ENCODE measurements at regions of chr4 and their contacts with region 1.

Region 1: DNA sequence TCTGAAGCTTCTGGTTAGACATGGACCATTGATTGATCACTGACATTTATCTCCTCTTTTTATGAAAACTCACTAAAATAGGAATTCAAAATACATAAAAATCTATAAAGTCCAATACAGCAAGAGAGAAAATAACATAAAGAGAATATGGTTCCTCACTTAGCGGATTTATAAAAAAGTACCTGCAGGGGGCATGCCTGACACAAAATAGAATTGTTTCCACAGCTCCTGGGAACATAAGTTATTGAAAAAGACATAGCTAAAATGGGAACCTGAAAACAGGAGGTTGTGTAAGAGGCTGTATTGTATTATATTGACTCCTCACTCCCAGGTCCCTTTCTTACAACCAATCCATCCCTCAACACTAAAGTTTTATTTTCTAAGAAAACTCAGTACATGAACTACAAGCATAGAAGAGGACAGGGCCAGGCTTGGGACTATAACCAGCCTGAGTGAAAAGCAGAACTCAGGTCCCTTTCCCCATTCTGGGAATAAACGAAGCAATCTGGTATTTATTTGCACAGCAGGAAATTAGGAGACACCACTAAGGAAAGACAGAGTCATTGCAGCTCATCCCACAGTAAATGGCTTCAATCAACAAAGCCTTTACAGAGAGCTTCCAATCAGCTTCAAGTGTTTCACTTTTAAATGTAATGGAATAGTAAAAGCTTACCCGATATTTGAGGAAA is 121.1 kb upstream of the NDST4 start:
- DNase-seq: peak; percentile 22
- ATAC-seq: peak; percentile 83
- H3K4me3 ChIP-seq: no peak overlapping the region
- H3K27ac ChIP-seq: no peak overlapping the region
- H3K4me1 ChIP-seq: no peaks in the 10 kb centered on the region
- H3K27me3 ChIP-seq: no peaks in the 10 kb centered on the region
- CTCF ChIP-seq: peak; percentile 22 to 54 (median 33); a peak in 4 of 6 replicates
- POLR2A ChIP-seq: no peak
- RAD21 ChIP-seq: peak; percentile 62

Region 2: GRCh38 chr4:114911111-114911510 is 323.4 kb before region 1 on chr4:
- CTCF ChIA-PET with region 1: no interaction called
- POLR2A ChIA-PET with region 1: no interaction called
- RAD21 ChIA-PET with region 1: no interaction called
- intact Hi-C with region 1: no loop called
- DNase-seq: no peak
- ATAC-seq: no peak
- H3K4me3 ChIP-seq: no peak overlapping the region
- H3K27ac ChIP-seq: no peak overlapping the region
- H3K4me1 ChIP-seq: no peaks in the 10 kb centered on the region
- H3K27me3 ChIP-seq: no peaks in the 10 kb centered on the region
- CTCF ChIP-seq: no peak
- POLR2A ChIP-seq: no peak
- RAD21 ChIP-seq: no peak

Region 3: DNA sequence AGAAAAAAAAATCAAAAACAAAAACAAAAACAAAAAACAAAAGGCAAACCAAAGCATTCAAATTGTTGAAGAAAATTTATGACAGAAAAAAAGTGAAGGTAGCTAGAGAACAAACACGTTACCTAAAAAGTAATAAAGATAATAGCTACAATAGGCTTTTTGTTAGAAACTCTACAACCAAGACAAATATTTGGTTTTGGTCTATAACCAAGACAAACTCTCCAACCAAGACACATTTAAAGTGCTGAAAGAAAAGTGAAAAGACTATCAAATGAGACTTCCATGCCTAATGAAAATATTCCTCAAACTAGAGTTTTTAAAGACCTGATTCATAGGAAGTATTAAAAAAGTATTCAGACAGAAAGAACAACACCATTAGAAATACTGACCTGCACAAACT is 270.8 kb after region 1 on chr4:
- CTCF ChIA-PET with region 1: no interaction called
- POLR2A ChIA-PET with region 1: no interaction called
- RAD21 ChIA-PET with region 1: no interaction called
- intact Hi-C with region 1: no loop called
- DNase-seq: no peak
- ATAC-seq: no peak
- H3K4me3 ChIP-seq: no peak overlapping the region
- H3K27ac ChIP-seq: no peak overlapping the region
- H3K4me1 ChIP-seq: no peaks in the 10 kb centered on the region
- H3K27me3 ChIP-seq: no peaks in the 10 kb centered on the region
- CTCF ChIP-seq: no peak
- POLR2A ChIP-seq: no peak
- RAD21 ChIP-seq: no peak

Region 4: GRCh38 chr4:115537387-115537786 is 302.8 kb after region 1 on chr4:
- CTCF ChIA-PET with region 1: interaction called, 27 read pairs
- POLR2A ChIA-PET with region 1: no interaction called
- RAD21 ChIA-PET with region 1: interaction called in 1 of 2 experiments, 3 read pairs
- intact Hi-C with region 1: loop called (anchors 2 kb)
- DNase-seq: peak; percentile 12
- ATAC-seq: no peak
- H3K4me3 ChIP-seq: no peak overlapping the region
- H3K27ac ChIP-seq: no peak overlapping the region
- H3K4me1 ChIP-seq: no peaks in the 10 kb centered on the region
- H3K27me3 ChIP-seq: no peaks in the 10 kb centered on the region
- CTCF ChIP-seq: peak in 1 of 3 experiments; percentile 39; a peak in 2 of 6 replicates
- POLR2A ChIP-seq: no peak
- RAD21 ChIP-seq: peak; percentile 60

Region 5: DNA sequence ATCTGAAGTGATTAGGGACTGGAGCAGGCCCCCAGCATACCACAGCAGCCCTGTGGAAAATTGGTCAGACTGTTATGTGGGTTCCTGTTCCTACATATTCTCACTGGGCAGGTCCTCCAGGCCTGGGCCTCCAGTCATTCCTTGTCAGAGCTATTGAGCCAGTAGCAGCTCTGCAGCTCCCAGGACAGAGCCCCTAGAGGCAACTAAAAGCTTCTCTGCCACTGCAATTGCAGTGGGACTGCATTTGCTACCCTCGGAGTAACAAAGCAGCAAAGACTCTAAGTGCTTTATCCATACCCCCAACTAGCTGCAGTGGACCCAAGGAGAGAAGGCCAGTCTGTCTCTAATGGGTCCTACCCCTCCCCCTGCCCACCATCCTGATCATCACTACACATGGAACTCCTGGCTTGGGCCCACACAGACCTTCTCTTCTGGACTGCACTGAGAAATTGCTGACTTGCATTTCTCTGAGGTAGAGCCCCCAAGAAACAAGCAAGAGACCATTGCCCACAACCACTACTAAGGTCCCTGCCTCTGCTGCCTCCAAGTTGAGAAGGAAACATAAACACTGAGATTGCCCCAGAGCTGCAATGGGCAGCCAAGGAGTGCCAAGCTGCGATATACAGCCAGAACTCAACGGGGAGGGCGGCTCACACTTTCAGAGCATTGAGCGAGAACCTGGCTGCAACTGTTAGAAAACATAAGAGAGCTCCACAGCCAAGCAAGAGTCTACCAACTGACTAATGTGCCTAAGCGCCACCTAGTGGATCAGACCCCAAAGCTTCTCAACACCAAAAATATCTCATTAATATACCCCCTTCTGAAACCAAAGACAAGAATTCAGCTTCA is 617.6 kb after region 1 on chr4:
- CTCF ChIA-PET with region 1: interaction called, 26 read pairs
- POLR2A ChIA-PET with region 1: no interaction called
- RAD21 ChIA-PET with region 1: interaction called, 4 to 5 read pairs
- intact Hi-C with region 1: loop called (anchors 1 kb)
- DNase-seq: peak; percentile 51
- ATAC-seq: peak; percentile 87
- H3K4me3 ChIP-seq: no peak overlapping the region
- H3K27ac ChIP-seq: no peak overlapping the region
- H3K4me1 ChIP-seq: no peaks in the 10 kb centered on the region
- H3K27me3 ChIP-seq: no peaks in the 10 kb centered on the region
- CTCF ChIP-seq: peak; percentile 25 to 76 (median 68); a peak in 5 of 6 replicates
- POLR2A ChIP-seq: no peak
- RAD21 ChIP-seq: peak; percentile 67

Measured in HCT116 (cell line).